ENCODE measurements at regions of chr5 and their contacts with region 1.

Region 1: GRCh38 chr5:43484106-43484849 is 613 bp upstream of the TMEM267 start:
- DNase-seq: peak; percentile 72 to 92 (median 86)
- ATAC-seq: peak; percentile 67
- H3K4me3 ChIP-seq: peak overlapping the region; percentile 76 to 97
- H3K4me3 Mint-ChIP-seq: peak overlapping the region; percentile 98
- H3K27ac ChIP-seq: peak overlapping the region; percentile 96 to 99
- H3K27ac Mint-ChIP-seq: peak overlapping the region; percentile 100
- H3K4me1 ChIP-seq: peaks cover 30% of the 10 kb centered on the region
- H3K4me1 Mint-ChIP-seq: peaks cover 53% of the 10 kb centered on the region
- H3K27me3 ChIP-seq: no peaks in the 10 kb centered on the region
- H3K27me3 Mint-ChIP-seq: no peaks in the 10 kb centered on the region
- CTCF ChIP-seq: peak; percentile 73

Region 2: GRCh38 chr5:41903892-41904799 is 1580.1 kb before region 1 on chr5 and contains the start of gene RIMOC1:
- CTCF ChIA-PET with region 1: no interaction called
- POLR2A ChIA-PET with region 1: interaction called, 12 read pairs
- intact Hi-C with region 1: loop called in 1 of 2 experiments (anchors 5 kb)
- DNase-seq: peak; percentile 94 to 99 (median 97)
- ATAC-seq: peak; percentile 89
- H3K4me3 ChIP-seq: peak within 1 kb of the TSS; percentile 73 to 83
- H3K4me3 Mint-ChIP-seq: peak within 1 kb of the TSS; percentile 99
- H3K27ac ChIP-seq: peak within 1 kb of the TSS; percentile 84 to 91
- H3K27ac Mint-ChIP-seq: peak within 1 kb of the TSS; percentile 100
- H3K4me1 ChIP-seq: peaks cover 17% of the 10 kb centered on the region
- H3K4me1 Mint-ChIP-seq: peaks cover 44% of the 10 kb centered on the region
- H3K27me3 ChIP-seq: no peaks in the 10 kb centered on the region
- H3K27me3 Mint-ChIP-seq: no peaks in the 10 kb centered on the region
- CTCF ChIP-seq: no peak
- total RNA-seq, gene RIMOC1: 9.0 to 9.2 TPM

Region 3: DNA sequence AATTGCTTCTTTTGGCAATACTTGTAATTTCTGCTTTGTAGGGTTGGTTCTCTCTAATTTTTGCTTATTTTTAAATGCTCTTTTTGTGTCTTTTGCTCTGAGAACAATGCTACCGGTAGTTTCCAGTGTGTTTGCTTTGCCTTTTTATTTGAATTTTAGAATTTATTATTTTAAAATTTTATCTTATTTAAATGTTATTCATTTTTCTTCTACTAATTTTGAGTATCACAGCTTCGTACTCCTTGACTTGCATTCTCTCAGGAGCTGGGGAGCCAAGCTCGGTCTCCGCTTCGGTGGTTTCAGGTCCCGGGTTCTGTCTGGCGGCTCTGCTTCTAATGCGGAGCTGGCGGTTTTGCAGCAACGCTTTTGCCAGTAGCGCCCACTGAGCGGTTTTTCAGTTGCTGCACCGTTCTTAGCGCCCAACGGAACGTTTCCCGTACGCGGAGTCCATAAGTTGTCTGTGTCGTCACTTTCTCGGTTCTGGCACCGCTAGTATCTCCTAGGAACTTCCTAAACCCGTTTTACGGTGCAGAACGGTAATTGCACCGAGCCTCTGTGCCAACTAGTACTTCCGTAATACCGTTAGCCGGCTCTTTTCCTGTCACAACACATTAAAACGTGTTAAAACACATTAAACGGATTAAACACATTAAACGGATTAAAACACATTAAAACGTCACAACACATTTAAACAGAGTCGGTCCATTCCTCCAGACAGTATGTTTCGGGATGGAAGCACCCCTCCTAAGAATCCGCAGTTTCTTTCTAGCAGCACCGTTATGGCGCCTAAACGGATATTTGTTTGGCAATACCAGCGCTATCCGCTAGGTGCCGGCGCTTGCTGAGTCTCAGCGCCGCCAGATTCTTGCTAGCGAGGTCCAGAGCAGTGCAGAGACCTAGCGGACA is 489.8 kb before region 1 on chr5:
- CTCF ChIA-PET with region 1: interaction called, 4 read pairs
- POLR2A ChIA-PET with region 1: interaction called, 46 read pairs
- intact Hi-C with region 1: loop called (anchors 5 to 10 kb)
- DNase-seq: peak; percentile 75 to 94 (median 88)
- ATAC-seq: peak; percentile 63
- H3K4me3 ChIP-seq: peak overlapping the region; percentile 78 to 92
- H3K4me3 Mint-ChIP-seq: peak overlapping the region; percentile 99
- H3K27ac ChIP-seq: peak overlapping the region; percentile 97
- H3K27ac Mint-ChIP-seq: peak overlapping the region; percentile 100
- H3K4me1 ChIP-seq: peaks cover 23% of the 10 kb centered on the region
- H3K4me1 Mint-ChIP-seq: peaks cover 41% of the 10 kb centered on the region
- H3K27me3 ChIP-seq: no peaks in the 10 kb centered on the region
- H3K27me3 Mint-ChIP-seq: no peaks in the 10 kb centered on the region
- CTCF ChIP-seq: peak; percentile 93

Region 4: DNA sequence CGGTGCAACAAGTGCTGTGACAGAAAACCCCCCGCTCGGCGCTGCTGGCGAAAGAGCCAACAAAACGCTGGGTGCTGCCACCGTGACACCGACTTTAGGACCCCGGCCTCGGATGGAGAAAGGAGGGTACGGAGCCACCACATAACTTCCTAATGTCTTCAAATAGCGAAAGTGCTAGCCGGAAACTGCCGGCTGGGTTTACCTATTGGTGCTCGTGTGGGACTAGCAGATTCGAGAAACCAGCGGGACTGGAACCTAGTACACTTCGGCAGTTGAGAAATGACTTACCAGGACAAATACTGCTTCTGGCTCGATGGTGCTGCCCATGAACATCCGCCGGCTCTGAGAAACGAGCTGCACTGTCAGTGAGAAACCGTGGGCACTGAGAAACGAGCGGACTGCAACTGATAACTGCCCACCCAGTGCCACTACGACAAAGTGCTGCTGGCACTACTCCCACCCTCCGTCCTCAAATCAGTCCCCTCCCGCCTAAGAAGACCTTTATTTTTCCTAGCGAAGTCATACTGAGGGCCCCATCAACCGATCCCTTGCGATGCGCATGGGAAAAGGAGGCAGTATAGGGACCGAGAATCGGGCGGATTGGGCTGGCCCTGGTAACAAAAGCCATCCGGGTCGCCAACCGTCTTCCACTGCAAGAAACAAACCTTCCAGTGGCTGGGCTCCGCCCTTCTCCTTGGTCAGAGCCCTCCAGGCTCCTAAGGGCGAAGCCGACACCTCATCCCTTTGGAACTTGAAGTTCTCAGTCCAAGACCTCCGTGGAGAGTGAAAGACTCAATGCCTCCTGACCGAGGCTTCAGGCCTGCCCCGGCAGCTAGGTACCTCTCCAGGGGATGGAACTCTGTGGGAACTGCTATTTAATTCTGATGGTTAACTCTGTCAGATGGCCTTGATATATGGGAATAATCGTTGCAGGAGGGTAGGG is 417.2 kb before region 1 on chr5:
- CTCF ChIA-PET with region 1: interaction called, 4 read pairs
- POLR2A ChIA-PET with region 1: interaction called, 43 read pairs
- intact Hi-C with region 1: loop called (anchors 2 to 5 kb)
- DNase-seq: peak; percentile 85 to 94 (median 90)
- ATAC-seq: peak; percentile 43
- H3K4me3 ChIP-seq: peak overlapping the region; percentile 87 to 99
- H3K4me3 Mint-ChIP-seq: peak overlapping the region; percentile 98
- H3K27ac ChIP-seq: peak overlapping the region; percentile 96 to 98
- H3K27ac Mint-ChIP-seq: peak overlapping the region; percentile 100
- H3K4me1 ChIP-seq: peaks cover 18% of the 10 kb centered on the region
- H3K4me1 Mint-ChIP-seq: peaks cover 48% of the 10 kb centered on the region
- H3K27me3 ChIP-seq: no peaks in the 10 kb centered on the region
- H3K27me3 Mint-ChIP-seq: no peaks in the 10 kb centered on the region
- CTCF ChIP-seq: no peak

Region 5: GRCh38 chr5:43313035-43313853 is 171.0 kb before region 1 on chr5 and contains the start of gene HMGCS1:
- CTCF ChIA-PET with region 1: interaction called, 5 read pairs
- POLR2A ChIA-PET with region 1: interaction called, 84 read pairs
- intact Hi-C with region 1: loop called (anchors 1 to 2 kb)
- DNase-seq: peak; percentile 95 to 100 (median 98)
- ATAC-seq: peak; percentile 90
- H3K4me3 ChIP-seq: peak within 1 kb of the TSS; percentile 69 to 97
- H3K4me3 Mint-ChIP-seq: peak within 1 kb of the TSS; percentile 95
- H3K27ac ChIP-seq: peak within 1 kb of the TSS; percentile 84 to 98
- H3K27ac Mint-ChIP-seq: peak within 1 kb of the TSS; percentile 94
- H3K4me1 ChIP-seq: peaks cover 16% of the 10 kb centered on the region
- H3K4me1 Mint-ChIP-seq: peaks cover 40% of the 10 kb centered on the region
- H3K27me3 ChIP-seq: no peaks in the 10 kb centered on the region
- H3K27me3 Mint-ChIP-seq: no peaks in the 10 kb centered on the region
- CTCF ChIP-seq: peak; percentile 21
- total RNA-seq, gene HMGCS1: 74.1 to 74.7 TPM

Region 6: GRCh38 chr5:43497311-43498104 is 13.2 kb after region 1 on chr5:
- CTCF ChIA-PET with region 1: interaction called, 10 read pairs
- POLR2A ChIA-PET with region 1: interaction called, 7 read pairs
- intact Hi-C with region 1: no loop called
- DNase-seq: peak in 1 of 9 experiments; percentile 17
- ATAC-seq: no peak
- H3K4me3 ChIP-seq: no peak overlapping the region
- H3K4me3 Mint-ChIP-seq: peak overlapping the region; percentile 38
- H3K27ac ChIP-seq: no peak overlapping the region
- H3K27ac Mint-ChIP-seq: no peak overlapping the region
- H3K4me1 ChIP-seq: no peaks in the 10 kb centered on the region
- H3K4me1 Mint-ChIP-seq: no peaks in the 10 kb centered on the region
- H3K27me3 ChIP-seq: no peaks in the 10 kb centered on the region
- H3K27me3 Mint-ChIP-seq: no peaks in the 10 kb centered on the region
- CTCF ChIP-seq: no peak

Region 7: DNA sequence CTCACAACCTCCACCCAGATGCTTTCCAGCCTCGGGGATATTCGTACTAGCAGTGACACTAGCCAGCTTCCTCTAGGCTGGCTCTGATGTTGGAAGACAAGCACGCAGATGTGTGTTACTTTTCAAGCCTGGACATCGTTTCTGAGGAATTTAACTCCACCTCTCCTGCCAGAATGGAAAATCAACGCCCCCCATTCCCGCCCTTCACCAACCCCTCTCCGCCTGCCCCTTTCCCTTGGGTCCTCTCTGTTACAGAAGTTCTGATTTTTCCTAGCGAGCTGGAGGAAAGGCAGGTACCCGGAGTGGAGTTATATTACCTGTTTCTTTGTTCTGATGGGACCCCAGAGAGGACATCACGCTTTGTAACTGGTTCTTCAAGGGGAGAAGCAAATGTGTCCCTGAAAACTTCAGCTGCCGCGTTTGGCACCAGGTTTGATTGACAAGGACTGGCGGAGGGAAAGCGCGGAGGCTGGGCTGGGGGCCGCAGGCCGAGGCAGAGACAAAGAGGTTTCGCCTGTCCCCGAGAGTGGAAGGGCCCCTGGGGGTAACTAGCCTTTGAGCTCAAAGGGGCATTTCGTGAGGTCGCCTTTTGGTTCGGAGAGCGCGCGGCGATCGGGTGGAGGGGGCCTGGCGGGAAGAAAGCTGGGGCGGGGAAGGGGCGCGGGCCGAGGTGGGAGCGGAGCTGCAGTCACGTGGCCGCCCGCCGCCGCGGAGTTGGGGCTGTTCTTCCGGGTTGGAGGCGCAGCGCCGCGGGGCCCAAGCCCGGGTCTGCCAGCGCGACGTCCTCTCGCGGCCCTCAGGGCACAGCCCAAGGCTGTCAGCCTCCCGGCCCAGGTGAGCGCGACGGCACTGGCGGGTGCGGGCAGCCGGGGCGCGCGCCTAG is 118.4 kb after region 1 on chr5 and contains the start of gene NNT:
- CTCF ChIA-PET with region 1: interaction called, 7 read pairs
- POLR2A ChIA-PET with region 1: interaction called, 47 read pairs
- intact Hi-C with region 1: loop called (anchors 2 to 5 kb)
- DNase-seq: peak; percentile 46 to 87 (median 78)
- ATAC-seq: peak; percentile 71
- H3K4me3 ChIP-seq: peak within 1 kb of the TSS; percentile 95 to 98
- H3K4me3 Mint-ChIP-seq: peak within 1 kb of the TSS; percentile 89
- H3K27ac ChIP-seq: peak within 1 kb of the TSS; percentile 85 to 88
- H3K27ac Mint-ChIP-seq: peak within 1 kb of the TSS; percentile 92
- H3K4me1 ChIP-seq: peaks cover 14% of the 10 kb centered on the region
- H3K4me1 Mint-ChIP-seq: peaks cover 59% of the 10 kb centered on the region
- H3K27me3 ChIP-seq: no peaks in the 10 kb centered on the region
- H3K27me3 Mint-ChIP-seq: no peaks in the 10 kb centered on the region
- CTCF ChIP-seq: no peak
- total RNA-seq, gene NNT: 19.4 to 20.2 TPM

Region 8: DNA sequence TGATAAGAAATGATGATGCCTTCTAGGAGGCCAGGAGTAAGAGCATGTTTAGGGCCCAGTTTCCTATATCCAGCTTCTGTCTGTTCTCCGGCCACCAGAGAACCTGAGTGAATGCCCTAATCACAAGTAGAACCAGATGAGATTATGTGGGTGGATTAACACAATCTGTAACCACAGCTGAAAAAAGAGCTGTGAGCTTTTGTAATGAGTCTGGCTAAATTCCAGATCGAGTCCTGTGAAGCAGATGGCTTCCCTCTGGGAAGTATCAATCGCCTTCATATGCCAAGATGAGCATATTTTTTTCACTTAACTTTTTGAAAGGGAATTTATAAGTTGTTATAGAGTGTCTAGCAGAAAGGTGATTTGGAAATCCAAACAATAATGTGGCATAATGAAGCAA is 218.5 kb after region 1 on chr5:
- CTCF ChIA-PET with region 1: no interaction called
- POLR2A ChIA-PET with region 1: no interaction called
- intact Hi-C with region 1: no loop called
- DNase-seq: no peak
- ATAC-seq: no peak
- H3K4me3 ChIP-seq: no peak overlapping the region
- H3K4me3 Mint-ChIP-seq: no peak overlapping the region
- H3K27ac ChIP-seq: no peak overlapping the region
- H3K27ac Mint-ChIP-seq: no peak overlapping the region
- H3K4me1 ChIP-seq: no peaks in the 10 kb centered on the region
- H3K4me1 Mint-ChIP-seq: no peaks in the 10 kb centered on the region
- H3K27me3 ChIP-seq: no peaks in the 10 kb centered on the region
- H3K27me3 Mint-ChIP-seq: no peaks in the 10 kb centered on the region
- CTCF ChIP-seq: no peak

Measured in CD8-positive, alpha-beta T cell (primary cell).